ENCODE measurements at regions of chr5 and their contacts with region 1.

Region 1: GRCh38 chr5:157858527-157859226 is at the start of gene CLINT1:
- DNase-seq: peak; percentile 84 to 94 (median 89)
- ATAC-seq: peak; percentile 95
- H3K4me3 ChIP-seq: peak within 1 kb of the TSS; percentile 96
- H3K27ac ChIP-seq: peak within 1 kb of the TSS; percentile 87
- H3K4me1 ChIP-seq: peaks cover 7 to 21% of the 10 kb centered on the region in 2 experiments
- H3K27me3 ChIP-seq: no peaks in the 10 kb centered on the region
- CTCF ChIP-seq: no peak
- EP300 ChIP-seq: no peak
- POLR2A ChIP-seq: peak; percentile 87
- RAD21 ChIP-seq: no peak
- polyA plus RNA-seq, gene CLINT1: 23.6 to 24.5 TPM

Region 2: GRCh38 chr5:157917899-157918809 is 59.5 kb after region 1 on chr5:
- CTCF ChIA-PET with region 1: no interaction called
- POLR2A ChIA-PET with region 1: no interaction called
- in situ Hi-C with region 1: no loop called
- intact Hi-C with region 1: loop called (anchors 1 kb)
- DNase-seq: peak; percentile 24 to 78 (median 32)
- ATAC-seq: peak; percentile 97
- H3K4me3 ChIP-seq: no peak overlapping the region
- H3K27ac ChIP-seq: no peak overlapping the region
- H3K4me1 ChIP-seq: peaks cover 0 to 13% of the 10 kb centered on the region in 2 experiments; a peak in 3 of 5 replicates
- H3K27me3 ChIP-seq: no peaks in the 10 kb centered on the region
- CTCF ChIP-seq: peak; percentile 63 to 71 (median 65)
- EP300 ChIP-seq: peak; percentile 17; the same call in 1 of the 2 replicates
- POLR2A ChIP-seq: no peak
- RAD21 ChIP-seq: peak; percentile 58 to 69

Region 3: DNA sequence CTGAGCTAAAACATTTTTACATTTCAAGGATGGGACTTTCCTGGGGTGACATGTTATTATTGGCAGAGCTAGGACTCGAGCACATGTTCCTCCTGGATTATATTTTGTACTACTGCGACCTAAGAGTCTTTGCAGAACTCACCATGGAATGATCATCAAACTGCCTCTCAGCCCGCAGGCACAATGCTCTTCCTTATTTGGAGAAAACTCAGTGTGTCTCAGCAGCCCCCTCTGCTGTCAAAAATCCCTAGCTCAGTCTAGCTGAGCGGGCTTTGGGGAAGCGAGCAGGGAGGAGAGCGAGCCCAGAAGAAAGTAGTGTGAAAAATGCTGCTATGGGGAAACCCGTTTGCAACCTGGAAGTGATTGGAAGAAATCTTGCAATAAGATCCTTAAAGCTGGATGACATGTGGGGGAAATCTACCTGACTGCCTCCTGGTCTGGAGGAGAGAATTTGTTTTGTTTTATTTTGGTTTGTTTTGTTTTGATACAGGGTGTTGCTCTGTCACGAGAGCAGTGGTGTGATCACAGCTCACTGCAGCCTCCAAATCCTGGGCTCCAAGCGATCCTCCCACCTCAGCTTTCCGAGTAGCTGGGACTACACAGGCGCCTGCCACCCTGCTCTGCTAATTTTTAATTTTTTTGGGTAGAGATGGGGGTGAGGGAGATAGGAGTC is 90.2 kb after region 1 on chr5:
- CTCF ChIA-PET with region 1: interaction called, 4 read pairs
- POLR2A ChIA-PET with region 1: interaction called, 4 read pairs
- in situ Hi-C with region 1: no loop called
- intact Hi-C with region 1: loop called (anchors 2 kb)
- DNase-seq: peak; percentile 32 to 91 (median 50)
- ATAC-seq: peak; percentile 99
- H3K4me3 ChIP-seq: no peak overlapping the region
- H3K27ac ChIP-seq: peak overlapping the region; percentile 20; the same call in 1 of the 3 replicates
- H3K4me1 ChIP-seq: no peaks in the 10 kb centered on the region; a peak in 3 of 5 replicates
- H3K27me3 ChIP-seq: peaks cover 4 to 5% of the 10 kb centered on the region in 2 experiments; a peak in 3 of 5 replicates
- CTCF ChIP-seq: peak; percentile 78 to 90 (median 88)
- EP300 ChIP-seq: peak; percentile 41; the same call in 1 of the 2 replicates
- POLR2A ChIP-seq: no peak
- RAD21 ChIP-seq: peak; percentile 61 to 77

Region 4: GRCh38 chr5:157994906-157995519 is 136.3 kb after region 1 on chr5:
- CTCF ChIA-PET with region 1: interaction called, 6 read pairs
- POLR2A ChIA-PET with region 1: no interaction called
- in situ Hi-C with region 1: no loop called
- intact Hi-C with region 1: loop called (anchors 10 kb)
- DNase-seq: peak; percentile 26 to 71 (median 47)
- ATAC-seq: peak; percentile 99
- H3K4me3 ChIP-seq: no peak overlapping the region
- H3K27ac ChIP-seq: no peak overlapping the region
- H3K4me1 ChIP-seq: no peaks in the 10 kb centered on the region
- H3K27me3 ChIP-seq: peaks cover 8 to 17% of the 10 kb centered on the region in 2 experiments; a peak in 4 of 5 replicates
- CTCF ChIP-seq: peak; percentile 76 to 81 (median 78)
- EP300 ChIP-seq: no peak
- POLR2A ChIP-seq: no peak
- RAD21 ChIP-seq: peak; percentile 80 to 84